Activated T-helper 1 cell treated with anti-CD3 and anti-CD28 coated beads, Interleukin-12 subunit alpha, Interleukin-12 subunit beta, Interleukin-2, Interleukin-4 antibody, amounts not matched to agents 30 ng/mL and 10 ng/mL and 1 ng/mL, durations not matched to agents 14 hours and 24 hours and 36 hours (primary cell): ENCODE measurements at regions of chr20 and their contacts with region 1.

Region 1: DNA sequence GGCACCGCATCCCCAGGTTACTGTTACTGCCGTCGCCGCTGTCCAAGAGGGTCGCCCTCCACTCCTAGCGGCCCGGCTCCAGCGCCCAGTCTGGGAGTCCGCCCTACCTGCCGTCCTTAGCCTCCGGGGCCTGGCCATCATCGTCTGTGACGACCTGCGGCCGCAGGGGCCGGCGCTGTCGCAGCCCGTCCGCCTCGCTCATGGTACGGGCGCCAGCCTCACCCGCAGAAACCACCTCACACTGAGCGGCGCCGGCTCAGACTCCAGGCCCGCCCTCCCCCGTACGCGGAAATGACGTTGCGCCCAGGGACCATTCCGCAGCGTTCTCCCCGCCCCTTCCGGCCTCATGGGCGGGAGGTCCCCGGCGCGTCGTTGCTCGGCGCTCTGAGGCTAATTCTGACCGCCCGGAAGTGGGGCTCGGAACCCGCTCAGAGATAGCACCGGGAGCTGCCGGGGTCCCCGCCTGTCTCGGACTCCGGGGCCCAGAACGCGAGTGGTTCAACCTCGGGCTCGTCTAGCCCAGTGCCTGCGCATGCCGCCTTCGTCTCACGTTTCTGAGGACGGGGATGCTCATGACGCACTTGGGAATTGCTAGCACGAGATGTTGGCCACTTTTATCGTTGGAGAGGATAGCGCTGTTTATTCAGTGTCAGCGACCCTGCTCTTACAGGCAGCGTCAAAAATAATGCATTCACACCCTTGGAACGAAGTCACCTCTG is at the start of gene APMAP:
- DNase-seq: peak; percentile 95
- H3K4me3 Mint-ChIP-seq: peak within 1 kb of the TSS; percentile 99
- H3K27ac Mint-ChIP-seq: peak within 1 kb of the TSS; percentile 94
- H3K4me1 Mint-ChIP-seq: peaks cover 52% of the 10 kb centered on the region
- H3K27me3 Mint-ChIP-seq: peaks cover 10% of the 10 kb centered on the region
- total RNA-seq, gene APMAP: 57.7 and 58.7 TPM in 2 replicates

Region 2: GRCh38 chr20:23361598-23362384 is 1630.9 kb before region 1 on chr20 and contains the start of gene GZF1:
- intact Hi-C with region 1: loop called (anchors 5 kb)
- DNase-seq: peak; percentile 98
- H3K4me3 Mint-ChIP-seq: peak within 1 kb of the TSS; percentile 96
- H3K27ac Mint-ChIP-seq: peak within 1 kb of the TSS; percentile 92
- H3K4me1 Mint-ChIP-seq: peaks cover 56% of the 10 kb centered on the region
- H3K27me3 Mint-ChIP-seq: peaks cover 1% of the 10 kb centered on the region
- total RNA-seq, gene GZF1: 10.6 and 12.6 TPM in 2 replicates

Region 3: GRCh38 chr20:25057234-25058050 is 64.8 kb after region 1 on chr20:
- intact Hi-C with region 1: loop called (anchors 1 kb)
- DNase-seq: peak; percentile 83
- H3K4me3 Mint-ChIP-seq: peak overlapping the region; percentile 78
- H3K27ac Mint-ChIP-seq: peak overlapping the region; percentile 84
- H3K4me1 Mint-ChIP-seq: peaks cover 33% of the 10 kb centered on the region
- H3K27me3 Mint-ChIP-seq: peaks cover 47% of the 10 kb centered on the region

Region 4: GRCh38 chr20:25195014-25195961 is 202.6 kb after region 1 on chr20 and contains the start of gene ENTPD6:
- intact Hi-C with region 1: loop called (anchors 1 kb)
- DNase-seq: peak; percentile 89
- H3K4me3 Mint-ChIP-seq: peak within 1 kb of the TSS; percentile 91
- H3K27ac Mint-ChIP-seq: peak within 1 kb of the TSS; percentile 81
- H3K4me1 Mint-ChIP-seq: peaks cover 20% of the 10 kb centered on the region
- H3K27me3 Mint-ChIP-seq: no peaks in the 10 kb centered on the region
- total RNA-seq, gene ENTPD6: 42.5 and 43.5 TPM in 2 replicates

Region 5: GRCh38 chr20:25254986-25255680 is 262.5 kb after region 1 on chr20:
- intact Hi-C with region 1: no loop called
- DNase-seq: no peak
- H3K4me3 Mint-ChIP-seq: no peak overlapping the region
- H3K27ac Mint-ChIP-seq: no peak overlapping the region
- H3K4me1 Mint-ChIP-seq: peaks cover 36% of the 10 kb centered on the region
- H3K27me3 Mint-ChIP-seq: no peaks in the 10 kb centered on the region

Region 6: GRCh38 chr20:25294459-25295385 is 302.1 kb after region 1 on chr20:
- intact Hi-C with region 1: loop called (anchors 1 kb)
- DNase-seq: peak; percentile 35
- H3K4me3 Mint-ChIP-seq: no peak overlapping the region
- H3K27ac Mint-ChIP-seq: no peak overlapping the region
- H3K4me1 Mint-ChIP-seq: no peaks in the 10 kb centered on the region
- H3K27me3 Mint-ChIP-seq: no peaks in the 10 kb centered on the region

Region 7: GRCh38 chr20:25399037-25399430 is 406.4 kb after region 1 on chr20:
- intact Hi-C with region 1: loop called (anchors 2 kb)
- DNase-seq: no peak
- H3K4me3 Mint-ChIP-seq: no peak overlapping the region
- H3K27ac Mint-ChIP-seq: no peak overlapping the region
- H3K4me1 Mint-ChIP-seq: no peaks in the 10 kb centered on the region
- H3K27me3 Mint-ChIP-seq: peaks cover 14% of the 10 kb centered on the region